CD8-positive, alpha-beta T cell (primary cell): ENCODE measurements at regions of chr11 and their contacts with region 1.

Region 1: DNA sequence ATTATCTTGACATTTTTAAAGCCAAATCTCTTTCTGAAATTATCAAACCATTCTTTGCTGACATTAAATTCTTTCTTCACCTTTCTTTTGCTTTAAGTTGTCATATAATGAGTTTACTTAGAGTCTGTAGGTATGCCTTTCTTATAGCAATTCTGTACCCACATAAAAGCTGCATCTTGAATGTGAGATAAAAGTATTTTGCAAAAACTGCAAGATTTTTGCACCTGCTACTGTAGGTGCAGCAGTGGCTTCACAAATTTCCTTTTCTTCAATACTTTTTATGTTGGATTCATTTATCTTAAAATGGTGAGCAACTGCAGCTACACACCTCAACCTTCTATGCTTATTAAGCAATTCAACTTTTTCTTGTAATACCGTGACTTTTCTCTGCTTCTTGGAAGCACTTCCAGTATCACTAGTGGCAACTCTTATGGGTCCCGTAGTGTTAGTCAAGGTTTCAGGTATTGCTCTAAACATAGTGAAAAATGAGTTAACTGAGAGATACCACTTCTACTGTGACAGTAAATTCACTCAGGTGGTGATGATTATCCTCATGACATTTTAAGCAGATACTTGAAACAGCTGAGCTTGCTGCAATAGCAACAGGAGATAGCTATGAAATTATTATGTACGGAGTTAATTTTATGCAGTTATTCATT is 18.8 kb downstream of the ZFP91 start:
- DNase-seq: no peak
- ATAC-seq: no peak
- H3K4me3 ChIP-seq: no peak overlapping the region
- H3K4me3 Mint-ChIP-seq: peak overlapping the region; percentile 49
- H3K27ac ChIP-seq: no peak overlapping the region
- H3K27ac Mint-ChIP-seq: peak overlapping the region; percentile 87
- H3K4me1 ChIP-seq: peaks cover 43% of the 10 kb centered on the region
- H3K4me1 Mint-ChIP-seq: peaks cover 89% of the 10 kb centered on the region
- H3K27me3 ChIP-seq: no peaks in the 10 kb centered on the region
- H3K27me3 Mint-ChIP-seq: no peaks in the 10 kb centered on the region
- CTCF ChIP-seq: no peak

Region 2: DNA sequence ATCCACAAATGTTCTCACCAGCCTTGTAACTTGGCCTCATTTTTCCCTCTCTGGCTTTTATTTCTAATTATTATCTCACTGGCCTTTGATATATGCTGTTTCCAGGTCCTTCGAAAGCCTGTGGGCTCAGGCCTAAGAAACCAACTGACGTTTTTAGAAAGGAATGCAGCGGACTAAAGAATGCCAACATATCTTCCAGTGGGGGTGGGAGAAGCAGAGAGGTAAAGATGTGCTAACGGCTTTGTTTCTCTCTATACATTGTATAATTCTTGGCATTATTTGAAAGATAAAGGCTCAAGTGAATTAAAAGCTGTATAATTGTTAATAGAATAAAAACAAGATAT is 538.6 kb before region 1 on chr11:
- CTCF ChIA-PET with region 1: no interaction called
- POLR2A ChIA-PET with region 1: no interaction called
- intact Hi-C with region 1: no loop called
- DNase-seq: no peak
- ATAC-seq: no peak
- H3K4me3 ChIP-seq: no peak overlapping the region
- H3K4me3 Mint-ChIP-seq: no peak overlapping the region
- H3K27ac ChIP-seq: no peak overlapping the region
- H3K27ac Mint-ChIP-seq: no peak overlapping the region
- H3K4me1 ChIP-seq: no peaks in the 10 kb centered on the region
- H3K4me1 Mint-ChIP-seq: no peaks in the 10 kb centered on the region
- H3K27me3 ChIP-seq: no peaks in the 10 kb centered on the region
- H3K27me3 Mint-ChIP-seq: peaks cover 7% of the 10 kb centered on the region
- CTCF ChIP-seq: no peak

Region 3: GRCh38 chr11:58562375-58562800 is 35.2 kb before region 1 on chr11:
- CTCF ChIA-PET with region 1: interaction called, 19 read pairs
- POLR2A ChIA-PET with region 1: no interaction called
- intact Hi-C with region 1: loop called in 1 of 2 experiments (anchors 5 kb)
- DNase-seq: peak in 1 of 9 experiments; percentile 36
- ATAC-seq: peak; percentile 48
- H3K4me3 ChIP-seq: no peak overlapping the region
- H3K4me3 Mint-ChIP-seq: peak overlapping the region; percentile 20
- H3K27ac ChIP-seq: peak overlapping the region; percentile 7 to 37
- H3K27ac Mint-ChIP-seq: peak overlapping the region; percentile 90
- H3K4me1 ChIP-seq: peaks cover 53% of the 10 kb centered on the region
- H3K4me1 Mint-ChIP-seq: peaks cover 70% of the 10 kb centered on the region
- H3K27me3 ChIP-seq: no peaks in the 10 kb centered on the region
- H3K27me3 Mint-ChIP-seq: no peaks in the 10 kb centered on the region
- CTCF ChIP-seq: no peak

Region 4: DNA sequence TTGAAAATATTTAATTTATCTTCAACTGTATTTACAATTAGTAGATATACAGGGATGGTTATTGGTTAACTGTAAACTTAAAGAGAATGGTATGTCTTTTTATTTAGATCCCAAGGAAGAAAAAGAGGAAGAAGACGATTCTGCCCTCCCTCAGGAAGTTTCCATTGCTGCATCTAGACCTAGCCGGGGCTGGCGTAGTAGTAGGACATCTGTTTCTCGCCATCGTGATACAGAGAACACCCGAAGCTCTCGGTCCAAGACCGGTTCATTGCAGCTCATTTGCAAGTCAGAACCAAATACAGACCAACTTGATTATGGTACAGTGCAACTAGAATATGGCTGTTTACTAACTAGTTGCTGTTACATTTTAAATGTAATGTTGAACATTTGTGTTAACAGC is 12.1 kb after region 1 on chr11:
- CTCF ChIA-PET with region 1: interaction called, 4 read pairs
- POLR2A ChIA-PET with region 1: no interaction called
- intact Hi-C with region 1: loop called in 1 of 2 experiments (anchors 2 kb)
- DNase-seq: no peak
- ATAC-seq: no peak
- H3K4me3 ChIP-seq: no peak overlapping the region
- H3K4me3 Mint-ChIP-seq: no peak overlapping the region
- H3K27ac ChIP-seq: no peak overlapping the region
- H3K27ac Mint-ChIP-seq: no peak overlapping the region
- H3K4me1 ChIP-seq: peaks cover 16% of the 10 kb centered on the region
- H3K4me1 Mint-ChIP-seq: peaks cover 33% of the 10 kb centered on the region
- H3K27me3 ChIP-seq: no peaks in the 10 kb centered on the region
- H3K27me3 Mint-ChIP-seq: no peaks in the 10 kb centered on the region
- CTCF ChIP-seq: no peak

Region 5: GRCh38 chr11:58647141-58647699 is 49.6 kb after region 1 on chr11:
- CTCF ChIA-PET with region 1: no interaction called
- POLR2A ChIA-PET with region 1: no interaction called
- intact Hi-C with region 1: no loop called
- DNase-seq: no peak
- ATAC-seq: no peak
- H3K4me3 ChIP-seq: no peak overlapping the region
- H3K4me3 Mint-ChIP-seq: no peak overlapping the region
- H3K27ac ChIP-seq: no peak overlapping the region
- H3K27ac Mint-ChIP-seq: no peak overlapping the region
- H3K4me1 ChIP-seq: no peaks in the 10 kb centered on the region
- H3K4me1 Mint-ChIP-seq: no peaks in the 10 kb centered on the region
- H3K27me3 ChIP-seq: no peaks in the 10 kb centered on the region
- H3K27me3 Mint-ChIP-seq: no peaks in the 10 kb centered on the region
- CTCF ChIP-seq: no peak